PC-9 (cell line): ENCODE measurements at regions of chr15 and their contacts with region 1.

Region 1: GRCh38 chr15:74615508-74616365 is at the start of gene CLK3:
- DNase-seq: peak; percentile 84 to 97
- H3K4me3 ChIP-seq: peak within 1 kb of the TSS; percentile 87
- H3K27ac ChIP-seq: peak within 1 kb of the TSS; percentile 77
- H3K4me1 ChIP-seq: peaks cover 18% of the 10 kb centered on the region
- H3K27me3 ChIP-seq: 0 out of 2 replicates have a peak, but pooled peaks cover 2% of the 10 kb centered on the region
- CTCF ChIP-seq: no peak
- total RNA-seq, gene CLK3: 70.7 and 80.1 TPM in 2 replicates

Region 2: DNA sequence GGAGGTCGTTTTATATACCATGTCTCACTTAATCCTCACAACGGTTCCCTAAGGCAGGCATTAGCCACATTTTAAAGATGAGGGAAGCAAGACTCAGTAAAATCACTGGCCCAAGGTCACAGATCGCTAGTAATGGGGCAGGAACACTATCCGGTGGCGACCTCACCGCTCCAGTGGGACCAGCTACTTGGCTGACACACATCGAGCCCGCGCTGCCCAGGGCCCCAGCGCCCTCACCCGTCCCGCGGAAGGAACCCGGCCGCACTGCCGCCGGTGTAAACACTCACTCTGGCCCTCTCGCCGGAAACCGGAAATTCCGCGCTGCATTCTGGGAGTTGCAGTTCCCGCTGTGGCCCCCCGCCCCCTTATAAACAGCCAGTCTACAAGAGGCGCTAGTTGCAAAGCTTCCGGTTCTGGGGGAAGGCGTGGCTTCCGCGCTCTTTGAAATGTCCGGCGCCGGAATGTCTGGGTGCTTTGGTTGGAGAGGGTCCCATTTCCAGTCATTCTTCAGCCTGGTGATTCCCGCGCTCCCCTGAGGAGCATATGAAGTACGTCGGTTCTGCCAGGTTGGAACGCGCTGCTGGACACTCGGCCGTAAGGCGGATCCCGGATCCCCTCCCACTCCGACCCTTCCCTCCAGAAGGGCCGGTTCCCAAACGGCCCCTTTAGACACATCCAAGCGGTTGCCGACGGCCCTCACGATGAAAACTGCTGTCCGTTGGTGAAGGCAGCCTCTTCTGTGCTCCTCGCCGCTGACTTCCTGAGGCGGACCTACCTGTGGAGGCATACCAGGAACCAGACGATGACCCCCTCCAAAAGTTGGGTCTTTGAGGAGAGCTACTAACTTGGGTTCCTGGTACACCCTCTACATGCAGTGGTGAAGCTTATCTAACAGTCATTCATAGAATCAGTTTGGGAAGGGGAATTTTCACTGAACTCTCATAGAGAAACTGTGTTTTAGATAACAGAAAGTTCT is 154.6 kb before region 1 on chr15 and contains the start of gene UBL7:
- CTCF ChIA-PET with region 1: no interaction called
- POLR2A ChIA-PET with region 1: interaction called, 7 read pairs
- intact Hi-C with region 1: loop called (anchors 1 kb)
- DNase-seq: peak; percentile 90 to 95
- H3K4me3 ChIP-seq: peak within 1 kb of the TSS; percentile 73
- H3K27ac ChIP-seq: peak within 1 kb of the TSS; percentile 41
- H3K4me1 ChIP-seq: 0 out of 2 replicates have a peak, but pooled peaks cover 7% of the 10 kb centered on the region
- H3K27me3 ChIP-seq: no peaks in the 10 kb centered on the region
- CTCF ChIP-seq: no peak
- total RNA-seq, gene UBL7: 73.9 and 89.6 TPM in 2 replicates

Region 3: DNA sequence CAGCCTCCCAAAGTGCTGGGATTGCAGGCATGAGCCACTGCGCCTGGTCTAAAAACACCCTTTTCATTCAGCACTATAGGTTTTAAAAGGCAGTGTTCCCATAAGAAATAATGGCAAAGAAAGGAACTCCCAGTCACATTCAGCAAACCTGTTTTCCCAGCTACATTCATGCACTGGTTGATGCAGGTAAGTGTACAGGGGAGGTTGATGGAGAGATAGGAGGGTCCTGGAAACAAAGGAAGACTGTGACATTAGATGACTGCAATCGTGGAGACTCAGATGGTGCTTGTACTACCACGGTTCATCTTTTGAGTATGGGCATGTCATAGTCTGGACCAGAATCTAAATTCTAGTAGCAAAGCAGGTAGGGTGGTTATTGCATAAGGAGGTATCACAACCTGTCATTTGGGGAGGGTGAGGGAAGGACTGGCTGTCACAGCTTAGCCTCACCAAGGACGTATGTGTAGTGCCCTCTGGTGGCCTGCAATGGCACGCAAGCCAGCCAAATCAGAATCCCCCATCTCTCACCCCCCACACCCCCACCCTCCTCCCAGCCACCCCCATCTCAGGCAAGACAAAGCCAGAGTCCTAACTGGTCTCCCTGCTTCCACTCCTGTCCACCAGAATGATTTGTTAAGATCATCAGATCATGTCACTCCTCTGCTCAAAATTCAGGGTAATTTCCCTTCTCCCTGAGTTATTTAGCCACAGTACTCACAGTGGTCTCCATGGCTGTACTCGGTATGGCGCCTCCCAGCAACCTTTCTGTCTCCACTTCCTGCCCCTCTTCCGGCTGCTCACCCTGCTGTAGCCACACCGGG is 126.0 kb before region 1 on chr15:
- CTCF ChIA-PET with region 1: interaction called, 10 read pairs
- POLR2A ChIA-PET with region 1: no interaction called
- intact Hi-C with region 1: no loop called
- DNase-seq: peak; percentile 48 to 57
- H3K4me3 ChIP-seq: no peak overlapping the region
- H3K27ac ChIP-seq: no peak overlapping the region
- H3K4me1 ChIP-seq: no peaks in the 10 kb centered on the region
- H3K27me3 ChIP-seq: no peaks in the 10 kb centered on the region
- CTCF ChIP-seq: peak; percentile 66

Region 4: DNA sequence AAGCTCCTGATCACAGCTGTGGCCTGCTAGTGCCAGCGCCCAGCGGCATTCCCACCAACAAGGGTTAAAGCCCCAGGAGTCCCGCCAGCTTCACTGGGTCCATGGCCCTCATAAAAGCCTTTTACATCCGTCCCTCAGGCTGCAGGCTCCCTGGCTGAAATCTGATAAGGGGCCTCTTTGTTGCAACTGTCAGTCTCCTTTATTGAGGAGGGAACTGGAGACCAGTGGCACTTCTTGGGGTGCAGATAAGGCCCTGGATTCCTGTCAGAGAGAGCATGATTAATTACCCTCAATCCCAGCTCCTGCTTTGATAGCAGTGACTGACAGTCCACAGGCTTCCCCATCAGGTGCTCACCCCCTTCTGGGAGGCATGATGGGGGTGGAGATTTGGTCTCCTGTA is 31.0 kb before region 1 on chr15:
- CTCF ChIA-PET with region 1: no interaction called
- POLR2A ChIA-PET with region 1: no interaction called
- intact Hi-C with region 1: loop called (anchors 1 kb)
- DNase-seq: no peak
- H3K4me3 ChIP-seq: no peak overlapping the region
- H3K27ac ChIP-seq: no peak overlapping the region
- H3K4me1 ChIP-seq: peaks cover 14% of the 10 kb centered on the region
- H3K27me3 ChIP-seq: no peaks in the 10 kb centered on the region
- CTCF ChIP-seq: no peak

Region 5: GRCh38 chr15:74816808-74817674 is 201.3 kb after region 1 on chr15:
- CTCF ChIA-PET with region 1: no interaction called
- POLR2A ChIA-PET with region 1: no interaction called
- intact Hi-C with region 1: no loop called
- DNase-seq: peak; percentile 69 to 75
- H3K4me3 ChIP-seq: no peak overlapping the region
- H3K27ac ChIP-seq: peak overlapping the region; percentile 4; the same call in 1 of the 2 replicates
- H3K4me1 ChIP-seq: peaks cover 37% of the 10 kb centered on the region
- H3K27me3 ChIP-seq: no peaks in the 10 kb centered on the region
- CTCF ChIP-seq: no peak; the same call in 1 of the 2 replicates